ENCODE measurements at regions of chr9 and their contacts with region 1.

Region 1: DNA sequence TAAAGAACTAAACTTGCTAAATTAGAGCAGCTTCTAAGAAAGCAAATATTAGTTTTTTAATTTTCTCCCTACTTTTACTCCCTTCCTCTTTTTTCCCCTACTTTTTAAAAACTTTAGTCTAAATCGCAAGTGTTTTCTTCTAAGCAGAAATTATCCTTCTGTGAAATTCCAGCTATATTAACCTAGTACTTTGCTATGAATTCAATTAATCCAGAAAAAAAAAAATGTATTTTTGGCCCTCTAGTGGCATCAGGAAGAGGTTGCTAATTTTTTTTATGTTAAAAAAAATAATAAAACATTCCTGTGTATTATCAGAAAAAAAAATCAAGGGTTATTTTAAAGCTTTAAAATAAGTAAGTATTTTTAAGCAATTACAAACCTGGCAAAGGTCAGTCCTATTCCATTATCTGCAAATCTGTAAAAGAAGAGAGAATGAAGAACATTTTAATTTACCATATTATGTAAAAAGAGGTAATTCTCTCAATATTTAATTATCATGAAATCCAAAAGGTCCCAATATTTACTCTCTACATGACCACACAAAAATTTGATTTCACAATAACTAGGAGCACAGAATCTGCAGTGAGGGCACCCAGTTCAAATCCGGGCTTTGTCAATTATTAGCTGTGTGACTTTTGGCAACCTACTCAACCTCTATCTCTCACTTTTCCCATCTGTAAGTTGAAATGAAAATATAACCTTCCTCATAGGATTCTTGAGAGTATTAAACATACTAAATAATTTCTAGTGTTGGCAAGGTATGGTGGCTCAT is 52.0 kb downstream of the CEMIP2 start:
- DNase-seq: no peak
- H3K4me3 ChIP-seq: no peak overlapping the region
- H3K27ac ChIP-seq: no peak overlapping the region
- H3K27me3 ChIP-seq: no peaks in the 10 kb centered on the region
- CTCF ChIP-seq: peak; percentile 60

Region 2: DNA sequence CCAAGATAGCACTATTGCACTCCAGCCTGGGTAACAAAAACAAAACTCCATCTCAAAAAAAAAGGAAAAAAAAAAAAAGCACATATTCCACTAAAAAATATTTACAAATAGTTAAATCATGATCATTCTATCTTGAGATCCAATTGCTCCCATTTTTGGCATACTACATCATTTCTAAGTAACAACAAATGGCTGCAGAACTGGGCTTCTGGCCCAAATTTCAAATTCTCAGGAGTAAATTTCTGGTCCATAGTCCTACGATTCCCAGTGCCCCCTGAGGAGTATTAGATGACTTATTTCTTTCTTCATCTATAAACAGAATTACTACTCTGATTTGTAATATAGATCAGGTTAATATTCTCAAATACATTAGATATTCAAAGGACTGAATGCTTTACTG is 10.1 kb before region 1 on chr9:
- CTCF ChIA-PET with region 1: interaction called, 16 read pairs
- POLR2A ChIA-PET with region 1: interaction called, 9 read pairs
- DNase-seq: no peak
- H3K4me3 ChIP-seq: no peak overlapping the region
- H3K27ac ChIP-seq: no peak overlapping the region
- H3K27me3 ChIP-seq: no peaks in the 10 kb centered on the region
- CTCF ChIP-seq: no peak